ENCODE measurements at regions of chr4 and their contacts with region 1.

Region 1: DNA sequence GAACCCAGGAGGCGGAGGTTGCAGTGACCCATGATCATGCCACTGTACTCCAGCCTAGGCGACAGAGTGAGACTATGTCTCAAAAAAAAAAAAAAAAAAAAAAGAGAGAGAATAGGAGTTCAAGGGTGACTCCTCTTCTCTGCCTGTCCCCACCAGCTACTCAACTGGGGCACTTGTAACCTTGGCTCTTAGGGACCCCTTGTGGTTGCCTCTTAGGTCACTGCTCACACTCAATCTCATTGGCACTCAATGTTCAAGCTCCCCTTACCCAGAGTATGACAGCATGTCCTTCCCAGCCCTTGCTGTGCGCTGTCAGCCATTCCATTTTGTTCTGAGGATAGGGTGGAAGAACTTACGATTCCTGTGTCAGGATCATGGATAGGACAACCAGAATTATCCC is 82.4 kb upstream of the BEND4 start:
- DNase-seq: no peak
- H3K4me3 ChIP-seq: no peak overlapping the region
- H3K27ac ChIP-seq: no peak overlapping the region
- H3K27me3 ChIP-seq: no peaks in the 10 kb centered on the region
- CTCF ChIP-seq: no peak

Region 2: DNA sequence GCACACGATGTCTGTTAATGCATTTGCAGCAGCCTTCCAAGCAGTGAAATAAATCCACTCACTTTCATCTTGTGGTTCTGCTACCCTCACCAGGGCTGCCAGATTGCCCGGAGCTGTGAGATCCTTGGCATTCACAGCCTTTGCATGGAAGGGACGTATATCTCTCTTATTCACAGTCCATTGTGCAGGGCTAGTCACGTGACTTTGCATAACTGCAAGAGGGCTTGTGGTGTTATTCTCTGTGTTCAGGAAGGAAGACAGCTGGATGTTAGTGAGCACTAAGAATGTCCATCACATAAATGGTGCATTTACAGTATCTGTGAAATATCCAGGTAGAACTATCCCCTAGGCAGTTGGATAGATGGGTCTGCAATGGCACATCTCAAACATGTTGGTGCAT is 14.2 kb after region 1 on chr4:
- intact Hi-C with region 1: loop called in 1 of 2 experiments (anchors 1 kb)
- DNase-seq: no peak
- H3K4me3 ChIP-seq: no peak overlapping the region
- H3K27ac ChIP-seq: no peak overlapping the region
- H3K27me3 ChIP-seq: peaks cover 0 to 6% (median 0%) of the 10 kb centered on the region in 45 donors
- CTCF ChIP-seq: no peak